H1 (cell line): ENCODE measurements at regions of chr17 and their contacts with region 1.

Region 1: GRCh38 chr17:28812091-28812747 is 30.4 kb downstream of the FAM222B start:
- DNase-seq: peak; percentile 96
- H3K4me3 ChIP-seq: peak overlapping the region; percentile 79 to 92 (median 86)
- H3K27ac ChIP-seq: peak overlapping the region; percentile 90
- H3K4me1 ChIP-seq: peaks cover 3 to 10% (median 7%) of the 10 kb centered on the region in 4 experiments; a peak in 6 of 7 replicates
- H3K27me3 ChIP-seq: no peaks in the 10 kb centered on the region
- CTCF ChIP-seq: no peak
- EP300 ChIP-seq: peak in 1 of 2 experiments; percentile 35; a peak in 1 of 3 replicates
- POLR2A ChIP-seq: peak in 1 of 2 experiments; percentile 79; a peak in 2 of 3 replicates
- RAD21 ChIP-seq: peak in 1 of 2 experiments; percentile 13; a peak in 1 of 4 replicates

Region 2: GRCh38 chr17:27980043-27980442 is 832.2 kb before region 1 on chr17:
- CTCF ChIA-PET with region 1: no interaction called
- POLR2A ChIA-PET with region 1: no interaction called
- DNase-seq: no peak
- H3K4me3 ChIP-seq: no peak overlapping the region
- H3K27ac ChIP-seq: no peak overlapping the region
- H3K4me1 ChIP-seq: peaks cover 0 to 4% (median 0%) of the 10 kb centered on the region in 4 experiments; a peak in 2 of 7 replicates
- H3K27me3 ChIP-seq: no peaks in the 10 kb centered on the region
- CTCF ChIP-seq: no peak
- EP300 ChIP-seq: no peak
- POLR2A ChIP-seq: no peak
- RAD21 ChIP-seq: no peak

Region 3: GRCh38 chr17:28743225-28744103 is 68.8 kb before region 1 on chr17 and contains the start of gene TRAF4:
- CTCF ChIA-PET with region 1: no interaction called
- POLR2A ChIA-PET with region 1: interaction called, 13 read pairs
- DNase-seq: peak in 1 of 2 experiments; percentile 87
- H3K4me3 ChIP-seq: peak within 1 kb of the TSS; percentile 94 to 99 (median 98)
- H3K27ac ChIP-seq: peak within 1 kb of the TSS; percentile 99
- H3K4me1 ChIP-seq: peaks cover 0 to 30% (median 24%) of the 10 kb centered on the region in 4 experiments; a peak in 6 of 7 replicates
- H3K27me3 ChIP-seq: no peaks in the 10 kb centered on the region
- CTCF ChIP-seq: peak in 2 of 3 experiments; percentile 8 to 17; a peak in 2 of 4 replicates
- EP300 ChIP-seq: no peak
- POLR2A ChIP-seq: peak; percentile 84 to 94; a peak in 2 of 3 replicates
- RAD21 ChIP-seq: no peak
- total RNA-seq, gene TRAF4: 167 TPM in 2 replicates

Region 4: GRCh38 chr17:28792877-28793661 is 19.1 kb before region 1 on chr17:
- CTCF ChIA-PET with region 1: interaction called, 5 read pairs
- POLR2A ChIA-PET with region 1: interaction called, 10 read pairs
- DNase-seq: no peak
- H3K4me3 ChIP-seq: no peak overlapping the region
- H3K27ac ChIP-seq: no peak overlapping the region
- H3K4me1 ChIP-seq: no peaks in the 10 kb centered on the region
- H3K27me3 ChIP-seq: no peaks in the 10 kb centered on the region
- CTCF ChIP-seq: no peak
- EP300 ChIP-seq: no peak
- POLR2A ChIP-seq: no peak
- RAD21 ChIP-seq: no peak